ENCODE measurements at regions of chr14 and their contacts with region 1.

Region 1: GRCh38 chr14:68685419-68686204 is 107.3 kb downstream of the ZFP36L1 start:
- DNase-seq: peak; percentile 84 to 97 (median 89)
- H3K4me3 ChIP-seq: peak overlapping the region in 1 of 2 donors; percentile 11
- H3K4me3 Mint-ChIP-seq: peak overlapping the region; percentile 49 to 85 (median 70)
- H3K27ac ChIP-seq: peak overlapping the region; percentile 70
- H3K27ac Mint-ChIP-seq: peak overlapping the region; percentile 93 to 98 (median 97)
- H3K4me1 ChIP-seq: peaks cover 58% of the 10 kb centered on the region
- H3K4me1 Mint-ChIP-seq: peaks cover 48 to 66% (median 60%) of the 10 kb centered on the region in 4 donors
- H3K27me3 ChIP-seq: no peaks in the 10 kb centered on the region
- H3K27me3 Mint-ChIP-seq: no peaks in the 10 kb centered on the region

Region 2: DNA sequence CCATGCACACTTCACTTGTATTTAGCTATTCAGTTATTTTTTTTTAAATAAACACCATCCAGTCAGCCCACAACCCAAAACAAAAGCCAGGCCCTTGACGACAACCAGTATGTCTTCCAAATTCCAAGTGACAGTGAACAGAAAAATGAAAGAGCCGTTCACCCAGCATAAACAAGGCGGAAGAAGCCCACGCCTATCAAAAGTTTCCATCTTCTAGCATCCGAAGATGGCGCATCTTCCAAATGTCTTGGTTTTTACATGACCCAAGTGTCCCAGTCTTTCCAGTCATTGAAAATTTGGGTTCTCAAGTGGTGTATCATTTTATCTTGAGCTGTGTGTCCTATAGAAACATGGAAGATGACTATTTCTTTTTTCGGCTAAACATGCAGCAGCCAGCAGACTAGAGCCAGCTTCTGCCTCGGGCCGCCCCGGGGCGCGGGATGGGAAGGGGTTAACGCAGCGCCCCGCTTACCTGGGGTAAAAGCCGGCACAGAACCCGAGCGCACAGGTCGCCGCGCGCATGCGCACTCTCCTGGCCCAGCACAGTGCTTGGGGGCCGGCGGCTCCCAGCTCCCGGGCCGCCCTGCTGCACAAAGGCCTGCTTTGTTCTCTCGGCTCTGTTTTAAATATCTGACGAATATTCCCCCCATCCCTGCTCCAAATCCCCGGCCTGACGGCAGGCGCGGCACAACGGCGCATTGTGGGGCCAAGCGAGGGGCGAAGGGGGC is 57.6 kb before region 1 on chr14:
- CTCF ChIA-PET with region 1: no interaction called
- POLR2A ChIA-PET with region 1: interaction called, 32 read pairs
- intact Hi-C with region 1: loop called (anchors 10 kb)
- DNase-seq: peak; percentile 34 to 60 (median 47)
- H3K4me3 ChIP-seq: peak overlapping the region in 1 of 2 donors; percentile 41
- H3K4me3 Mint-ChIP-seq: peak overlapping the region; percentile 74 to 88 (median 85)
- H3K27ac ChIP-seq: no peak overlapping the region
- H3K27ac Mint-ChIP-seq: peak overlapping the region; percentile 70 to 94 (median 81)
- H3K4me1 ChIP-seq: peaks cover 10% of the 10 kb centered on the region
- H3K4me1 Mint-ChIP-seq: peaks cover 8 to 25% (median 13%) of the 10 kb centered on the region in 4 donors
- H3K27me3 ChIP-seq: no peaks in the 10 kb centered on the region
- H3K27me3 Mint-ChIP-seq: no peaks in the 10 kb centered on the region

Region 3: DNA sequence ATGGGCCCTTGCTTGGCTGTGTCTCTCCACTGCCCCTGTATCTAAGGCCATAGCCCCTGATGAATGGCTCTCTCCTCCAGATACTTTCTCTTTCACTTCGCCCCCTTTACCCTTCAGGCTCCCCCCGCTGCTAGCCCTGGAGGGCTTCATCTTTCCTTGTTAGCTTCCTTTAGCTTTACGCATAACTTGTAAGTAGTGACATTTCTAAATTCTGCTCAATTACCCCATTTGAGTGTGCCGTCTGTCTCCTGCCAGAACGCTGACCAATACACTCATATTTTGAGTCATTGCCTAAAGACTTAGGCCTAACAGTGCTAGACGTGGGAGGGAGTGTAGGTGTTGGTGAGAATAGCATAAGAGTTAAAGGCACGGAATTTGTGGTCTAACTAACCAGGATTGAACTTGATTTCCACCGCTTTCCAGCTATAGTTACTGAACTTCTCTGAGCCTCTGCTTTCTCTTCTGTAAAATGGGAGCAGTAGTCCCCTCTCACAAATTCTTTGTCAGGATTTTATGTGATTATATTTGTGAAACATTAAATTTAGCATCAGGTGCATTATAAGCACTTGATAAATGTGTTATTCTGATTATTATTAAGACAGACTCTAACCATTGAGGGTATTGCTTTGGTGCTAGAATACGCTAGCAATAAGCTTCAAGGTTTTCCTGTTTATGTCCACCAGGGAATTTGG is 22.1 kb before region 1 on chr14:
- CTCF ChIA-PET with region 1: interaction called, 4 read pairs
- POLR2A ChIA-PET with region 1: interaction called, 10 read pairs
- intact Hi-C with region 1: no loop called
- DNase-seq: peak in 1 of 5 donors; percentile 13
- H3K4me3 ChIP-seq: peak overlapping the region; percentile 13 to 65
- H3K4me3 Mint-ChIP-seq: peak overlapping the region; percentile 83 to 97 (median 86)
- H3K27ac ChIP-seq: peak overlapping the region; percentile 3
- H3K27ac Mint-ChIP-seq: peak overlapping the region; percentile 14 to 93 (median 88)
- H3K4me1 ChIP-seq: peaks cover 33% of the 10 kb centered on the region
- H3K4me1 Mint-ChIP-seq: peaks cover 25 to 49% (median 32%) of the 10 kb centered on the region in 4 donors
- H3K27me3 ChIP-seq: no peaks in the 10 kb centered on the region
- H3K27me3 Mint-ChIP-seq: no peaks in the 10 kb centered on the region

Region 4: DNA sequence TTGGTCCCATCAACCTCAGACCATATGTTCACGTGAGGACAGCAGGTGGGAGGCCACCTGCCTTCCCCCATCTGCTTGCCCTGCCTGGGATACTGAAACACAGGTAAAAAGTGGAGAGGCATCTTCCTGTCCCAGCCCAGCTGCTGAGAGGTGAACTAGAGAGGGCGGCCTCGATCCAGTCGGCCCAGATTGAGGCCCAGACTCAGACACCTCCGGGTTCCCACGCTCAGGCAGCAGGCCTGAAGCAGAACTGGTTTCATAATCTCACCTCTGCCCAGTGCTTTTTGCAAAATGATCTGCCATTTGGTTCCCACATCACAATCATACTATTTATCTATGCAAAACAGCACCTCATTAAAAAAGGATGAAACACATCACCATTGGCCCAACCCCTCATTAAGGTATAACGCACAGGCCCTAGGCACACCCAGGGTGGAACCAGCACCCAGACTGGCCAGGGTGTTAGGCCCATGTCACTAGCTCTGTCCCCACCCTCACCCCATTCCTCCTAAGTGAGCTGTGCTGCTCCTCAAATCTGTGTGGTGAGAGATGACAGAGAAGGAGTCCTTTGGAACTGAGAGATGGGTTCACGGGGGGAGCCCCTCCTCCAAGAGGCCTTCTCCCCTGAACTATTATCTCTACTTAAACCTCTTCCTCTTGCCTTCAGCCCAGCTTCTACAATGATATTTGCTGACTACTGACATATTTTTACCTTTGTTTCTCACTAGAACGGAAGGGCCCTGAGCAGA is 26.1 kb after region 1 on chr14:
- CTCF ChIA-PET with region 1: interaction called, 4 read pairs
- POLR2A ChIA-PET with region 1: interaction called, 36 read pairs
- intact Hi-C with region 1: loop called (anchors 2 kb)
- DNase-seq: peak in 4 of 5 donors; percentile 26 to 35 (median 32)
- H3K4me3 ChIP-seq: no peak overlapping the region
- H3K4me3 Mint-ChIP-seq: peak overlapping the region in 6 of 8 donors; percentile 5 to 69 (median 45)
- H3K27ac ChIP-seq: peak overlapping the region; percentile 40
- H3K27ac Mint-ChIP-seq: peak overlapping the region; percentile 75 to 92 (median 86)
- H3K4me1 ChIP-seq: peaks cover 41% of the 10 kb centered on the region
- H3K4me1 Mint-ChIP-seq: peaks cover 37 to 50% (median 45%) of the 10 kb centered on the region in 4 donors
- H3K27me3 ChIP-seq: no peaks in the 10 kb centered on the region
- H3K27me3 Mint-ChIP-seq: no peaks in the 10 kb centered on the region

Region 5: GRCh38 chr14:68718023-68718995 is 32.7 kb after region 1 on chr14:
- CTCF ChIA-PET with region 1: interaction called, 8 read pairs
- POLR2A ChIA-PET with region 1: interaction called, 37 read pairs
- intact Hi-C with region 1: loop called (anchors 2 kb)
- DNase-seq: no peak
- H3K4me3 ChIP-seq: no peak overlapping the region
- H3K4me3 Mint-ChIP-seq: no peak overlapping the region
- H3K27ac ChIP-seq: no peak overlapping the region
- H3K27ac Mint-ChIP-seq: peak overlapping the region in 2 of 7 donors; percentile 11 to 35
- H3K4me1 ChIP-seq: peaks cover 40% of the 10 kb centered on the region
- H3K4me1 Mint-ChIP-seq: peaks cover 29 to 66% (median 40%) of the 10 kb centered on the region in 4 donors
- H3K27me3 ChIP-seq: no peaks in the 10 kb centered on the region
- H3K27me3 Mint-ChIP-seq: no peaks in the 10 kb centered on the region

Region 6: GRCh38 chr14:68734231-68734775 is 48.7 kb after region 1 on chr14:
- CTCF ChIA-PET with region 1: no interaction called
- POLR2A ChIA-PET with region 1: interaction called, 16 read pairs
- intact Hi-C with region 1: loop called (anchors 1 kb)
- DNase-seq: peak; percentile 21 to 61 (median 30)
- H3K4me3 ChIP-seq: no peak overlapping the region
- H3K4me3 Mint-ChIP-seq: peak overlapping the region in 7 of 8 donors; percentile 15 to 52 (median 41)
- H3K27ac ChIP-seq: peak overlapping the region; percentile 32
- H3K27ac Mint-ChIP-seq: peak overlapping the region; percentile 9 to 93 (median 75)
- H3K4me1 ChIP-seq: peaks cover 29% of the 10 kb centered on the region
- H3K4me1 Mint-ChIP-seq: peaks cover 24 to 43% (median 34%) of the 10 kb centered on the region in 4 donors
- H3K27me3 ChIP-seq: no peaks in the 10 kb centered on the region
- H3K27me3 Mint-ChIP-seq: no peaks in the 10 kb centered on the region

Region 7: DNA sequence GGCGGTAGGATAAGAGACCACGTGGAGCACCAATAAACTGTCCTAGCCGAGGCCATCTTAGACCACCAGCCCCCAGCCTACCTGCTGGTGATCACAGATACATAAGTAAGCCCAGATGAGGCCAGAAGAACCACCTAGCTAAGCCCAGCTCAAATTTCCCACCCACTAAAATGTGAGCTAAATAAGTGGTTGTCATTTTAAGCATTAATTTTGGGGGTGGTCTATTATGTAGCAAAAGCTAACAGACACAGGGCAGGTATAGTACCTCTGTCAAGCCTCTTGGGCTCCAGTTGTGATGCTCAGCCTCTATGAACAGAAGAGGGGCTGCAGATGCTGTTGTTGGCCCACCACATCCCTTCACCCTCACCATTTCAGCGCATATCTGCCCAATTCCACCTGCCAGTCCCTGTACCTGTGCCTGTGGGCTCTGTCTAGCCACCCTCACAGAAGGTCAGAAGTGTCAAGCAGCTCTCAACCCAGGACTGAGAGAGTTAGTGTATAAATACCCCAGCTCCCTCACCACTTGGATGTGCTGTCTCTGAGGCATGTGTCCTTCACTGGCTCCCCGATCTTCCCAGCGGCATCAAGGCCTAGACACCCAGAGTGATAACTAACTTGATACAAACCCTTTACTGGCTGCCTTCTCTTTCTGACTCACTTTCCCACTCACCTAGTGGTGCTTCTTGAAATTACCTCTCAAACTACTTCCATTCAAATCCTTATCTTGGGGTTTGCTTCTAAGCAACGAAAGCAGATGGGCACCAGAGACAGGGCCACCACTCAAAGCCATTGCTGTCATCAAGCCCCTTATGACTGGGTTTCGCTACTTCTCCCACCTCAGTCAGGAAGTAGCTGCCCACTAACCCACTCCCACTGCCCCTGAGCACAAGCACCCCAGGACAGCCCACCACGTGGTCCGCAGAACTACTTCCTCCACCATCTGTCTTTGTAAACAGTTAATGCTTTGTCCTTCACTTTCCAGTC is 89.8 kb after region 1 on chr14:
- CTCF ChIA-PET with region 1: interaction called, 48 read pairs
- POLR2A ChIA-PET with region 1: interaction called, 581 read pairs
- intact Hi-C with region 1: loop called (anchors 1 kb)
- DNase-seq: no peak
- H3K4me3 ChIP-seq: no peak overlapping the region
- H3K4me3 Mint-ChIP-seq: peak overlapping the region in 2 of 8 donors; percentile 11 to 20
- H3K27ac ChIP-seq: no peak overlapping the region
- H3K27ac Mint-ChIP-seq: peak overlapping the region in 5 of 7 donors; percentile 29 to 84 (median 57)
- H3K4me1 ChIP-seq: peaks cover 90% of the 10 kb centered on the region
- H3K4me1 Mint-ChIP-seq: peaks cover 62 to 98% (median 77%) of the 10 kb centered on the region in 4 donors
- H3K27me3 ChIP-seq: no peaks in the 10 kb centered on the region
- H3K27me3 Mint-ChIP-seq: no peaks in the 10 kb centered on the region